Activated CD4-positive, alpha-beta T cell treated with anti-CD3 and anti-CD28 coated beads, Interleukin-2, amount 10 ng/mL, durations not matched to agents 24 days and 14 days (primary cell): ENCODE measurements at regions of chr6 and their contacts with region 1.

Region 1: DNA sequence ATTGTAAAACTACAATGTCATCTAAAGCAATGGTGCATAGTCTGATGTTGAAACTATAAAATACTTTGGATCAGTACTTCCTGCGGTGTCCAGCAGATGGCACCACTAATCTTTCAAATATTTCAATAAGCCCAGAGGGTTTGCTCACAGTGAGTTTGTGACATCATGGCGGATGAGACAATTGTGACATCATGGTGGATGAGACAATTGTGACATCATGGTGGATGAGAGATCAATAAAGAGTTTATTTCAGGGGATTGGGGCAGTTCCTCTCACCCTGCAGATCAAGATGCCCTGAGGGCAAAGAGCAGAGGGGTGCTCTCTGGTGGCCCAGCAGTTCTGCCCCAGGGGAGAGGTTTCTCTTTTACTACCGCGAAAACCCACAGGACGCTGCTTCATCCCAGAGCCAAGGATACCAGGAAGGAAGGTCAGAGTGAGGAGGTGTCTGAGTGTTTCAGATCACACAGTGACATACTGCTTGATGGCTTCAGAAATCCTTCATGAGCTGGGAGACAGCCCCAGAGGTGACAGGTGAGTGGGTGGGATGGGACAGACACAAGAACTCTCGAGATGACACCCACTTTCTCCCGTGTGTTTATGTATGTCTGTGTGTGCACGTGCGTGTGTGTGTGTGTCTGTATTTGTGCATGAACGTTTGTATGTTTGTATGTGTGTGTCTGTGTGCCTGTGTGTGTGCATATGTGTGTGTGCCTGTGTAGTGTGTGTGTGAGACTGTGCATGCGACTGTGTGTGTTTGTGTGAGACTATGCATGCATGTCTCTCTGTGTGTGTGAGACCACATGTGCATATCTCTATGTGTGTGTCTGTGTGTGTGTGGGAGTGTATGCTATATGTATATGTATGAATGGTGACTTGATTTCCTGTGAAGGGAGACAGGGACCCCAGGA is 7.3 kb upstream of the ULBP2 start:
- DNase-seq: peak; percentile 92
- H3K4me3 Mint-ChIP-seq: no peak overlapping the region
- H3K27ac Mint-ChIP-seq: no peak overlapping the region
- H3K4me1 Mint-ChIP-seq: peaks cover 25% of the 10 kb centered on the region
- H3K27me3 Mint-ChIP-seq: peaks cover 88% of the 10 kb centered on the region

Region 2: GRCh38 chr6:149950423-149950822 is 15.9 kb after region 1 on chr6:
- intact Hi-C with region 1: loop called (anchors 2 kb)
- DNase-seq: no peak
- H3K4me3 Mint-ChIP-seq: no peak overlapping the region
- H3K27ac Mint-ChIP-seq: no peak overlapping the region
- H3K4me1 Mint-ChIP-seq: peaks cover 6% of the 10 kb centered on the region
- H3K27me3 Mint-ChIP-seq: peaks cover 77% of the 10 kb centered on the region

Region 3: DNA sequence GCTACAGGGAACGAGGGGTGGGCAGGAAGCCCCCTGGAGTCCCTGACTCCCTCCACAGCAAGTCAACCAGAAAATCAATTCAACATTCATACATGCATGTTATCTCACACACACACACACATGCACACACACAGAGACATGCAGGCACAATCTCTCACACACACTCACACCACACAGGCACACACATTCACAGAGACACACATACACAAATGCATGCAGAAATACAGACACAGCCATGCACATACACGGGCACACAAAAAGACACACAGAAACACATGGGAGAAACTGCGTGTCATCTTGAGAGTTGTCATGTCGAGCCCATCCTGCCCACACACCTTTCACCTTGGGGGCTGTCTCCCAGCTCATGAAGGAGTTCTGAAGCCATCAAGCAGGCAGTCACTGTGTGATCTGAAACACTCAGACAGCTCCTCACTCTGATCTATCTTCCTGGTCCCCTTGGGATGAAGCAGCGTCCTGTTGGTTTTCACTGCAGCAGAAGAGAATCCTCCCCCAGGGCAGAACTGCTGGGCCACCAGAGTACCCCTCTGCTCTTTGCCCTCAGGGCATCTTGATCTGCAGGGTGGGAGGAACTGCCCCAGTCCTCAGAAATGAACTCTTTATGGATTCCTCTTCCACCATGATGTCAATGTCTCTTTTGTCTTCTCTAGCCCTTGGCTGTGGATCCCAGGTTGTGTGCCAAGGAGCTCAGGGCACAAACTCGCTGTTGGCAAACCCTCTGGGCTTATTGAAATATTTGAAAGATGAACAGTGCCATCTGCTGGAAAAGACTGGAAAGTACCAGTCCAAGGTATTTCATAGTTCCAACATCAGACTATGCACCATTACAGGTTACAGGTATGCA is 82.1 kb after region 1 on chr6:
- intact Hi-C with region 1: loop called (anchors 1 kb)
- DNase-seq: peak; percentile 89
- H3K4me3 Mint-ChIP-seq: no peak overlapping the region
- H3K27ac Mint-ChIP-seq: no peak overlapping the region
- H3K4me1 Mint-ChIP-seq: peaks cover 16% of the 10 kb centered on the region
- H3K27me3 Mint-ChIP-seq: peaks cover 75% of the 10 kb centered on the region

Region 4: DNA sequence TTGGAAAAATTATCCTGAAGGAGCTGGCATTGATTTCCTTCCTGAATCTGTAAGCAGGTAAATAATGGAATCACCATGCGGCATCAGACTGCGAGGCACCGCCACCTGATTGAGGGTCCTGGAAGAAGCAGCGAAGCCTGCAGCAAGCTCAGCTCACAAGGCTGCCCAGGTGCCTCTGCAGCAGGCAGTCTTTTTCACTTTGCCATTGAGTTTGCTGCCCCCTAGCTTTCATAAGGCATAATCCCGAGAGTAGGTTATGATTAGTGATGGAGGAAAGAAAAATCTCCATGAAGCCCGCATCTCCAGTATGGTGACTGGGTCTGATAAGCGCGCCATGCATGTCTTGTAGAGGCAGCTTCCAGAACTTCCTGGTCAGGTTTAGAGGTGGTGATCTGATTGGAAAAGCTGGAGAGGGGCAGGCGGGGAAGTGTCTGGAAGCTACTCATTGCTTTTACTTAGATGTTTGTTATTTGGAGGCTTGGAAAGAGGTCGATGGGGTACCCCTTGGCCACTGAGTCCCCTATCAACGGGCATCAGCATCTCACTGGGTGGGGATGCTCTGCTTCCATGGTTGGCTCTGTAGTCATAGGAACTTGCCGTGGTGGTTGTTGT is 461.0 kb after region 1 on chr6:
- intact Hi-C with region 1: loop called (anchors 5 kb)
- DNase-seq: peak; percentile 77
- H3K4me3 Mint-ChIP-seq: no peak overlapping the region
- H3K27ac Mint-ChIP-seq: no peak overlapping the region
- H3K4me1 Mint-ChIP-seq: no peaks in the 10 kb centered on the region
- H3K27me3 Mint-ChIP-seq: peaks cover 8% of the 10 kb centered on the region